Activated CD4-positive, alpha-beta memory T cell treated with anti-CD3 and anti-CD28 coated beads for 36 hours (primary cell): ENCODE measurements at regions of chr6 and their contacts with region 1.

Region 1: GRCh38 chr6:24960991-24961475 is 25.3 kb upstream of the RIPOR2 start:
- DNase-seq: no peak
- H3K4me3 Mint-ChIP-seq: peak overlapping the region; percentile 23
- H3K27ac Mint-ChIP-seq: peak overlapping the region; percentile 71
- H3K4me1 Mint-ChIP-seq: peaks cover 75% of the 10 kb centered on the region
- H3K27me3 Mint-ChIP-seq: no peaks in the 10 kb centered on the region

Region 2: DNA sequence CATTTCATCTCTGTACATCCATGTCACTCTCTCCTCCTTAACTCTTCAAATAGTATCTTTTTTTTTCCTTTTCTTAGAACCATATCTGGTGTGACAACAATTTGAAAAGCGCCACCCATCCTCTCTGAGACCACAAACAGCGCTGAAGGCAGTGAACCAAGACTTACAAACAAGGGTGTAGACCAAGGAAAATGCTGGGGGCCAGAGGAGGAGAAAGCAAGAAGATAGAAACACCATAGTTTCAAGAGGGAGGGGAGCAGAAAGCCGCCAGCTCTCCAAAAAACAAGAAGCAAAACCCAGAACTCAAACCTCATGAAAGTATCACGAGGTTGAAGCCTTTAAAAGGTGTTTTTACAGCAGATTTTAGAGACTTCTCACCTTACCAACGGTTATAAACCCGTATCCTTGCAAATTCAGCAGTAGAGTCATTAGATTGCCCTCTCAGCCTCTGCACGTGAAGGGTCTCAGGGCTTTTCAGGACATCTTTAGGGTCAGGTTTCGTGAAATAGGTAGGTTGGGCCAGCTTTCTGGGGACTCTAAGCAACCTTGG is 11.9 kb before region 1 on chr6:
- CTCF ChIA-PET with region 1: interaction called, 3 read pairs
- POLR2A ChIA-PET with region 1: interaction called, 5 read pairs
- intact Hi-C with region 1: loop called (anchors 1 kb)
- DNase-seq: peak; percentile 53
- H3K4me3 Mint-ChIP-seq: peak overlapping the region; percentile 22
- H3K27ac Mint-ChIP-seq: peak overlapping the region; percentile 73
- H3K4me1 Mint-ChIP-seq: peaks cover 61% of the 10 kb centered on the region
- H3K27me3 Mint-ChIP-seq: no peaks in the 10 kb centered on the region